PC-9 (cell line): ENCODE measurements at regions of chr3 and their contacts with region 1.

Region 1: DNA sequence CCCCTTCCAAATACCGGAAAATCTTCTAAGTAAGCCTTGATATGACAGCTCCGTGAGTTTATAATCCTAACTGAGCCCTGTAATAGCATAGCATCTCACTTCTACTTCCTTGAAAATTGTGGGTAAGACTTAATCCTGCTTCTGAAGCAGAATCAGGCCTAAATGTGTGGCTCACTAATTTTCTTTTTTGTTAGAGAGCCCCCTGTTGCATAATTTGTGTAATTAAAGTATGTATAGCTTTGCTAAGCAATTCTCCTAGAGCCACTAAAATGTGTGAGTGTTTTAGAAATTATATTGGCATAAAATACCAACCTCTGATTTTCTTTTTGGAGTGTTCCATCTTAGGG is 304.4 kb downstream of the FGF12 start:
- DNase-seq: peak in 1 of 2 experiments; percentile 65
- H3K4me3 ChIP-seq: no peak overlapping the region
- H3K27ac ChIP-seq: no peak overlapping the region
- H3K4me1 ChIP-seq: peaks cover 9% of the 10 kb centered on the region
- H3K27me3 ChIP-seq: no peaks in the 10 kb centered on the region
- CTCF ChIP-seq: peak; percentile 79

Region 2: DNA sequence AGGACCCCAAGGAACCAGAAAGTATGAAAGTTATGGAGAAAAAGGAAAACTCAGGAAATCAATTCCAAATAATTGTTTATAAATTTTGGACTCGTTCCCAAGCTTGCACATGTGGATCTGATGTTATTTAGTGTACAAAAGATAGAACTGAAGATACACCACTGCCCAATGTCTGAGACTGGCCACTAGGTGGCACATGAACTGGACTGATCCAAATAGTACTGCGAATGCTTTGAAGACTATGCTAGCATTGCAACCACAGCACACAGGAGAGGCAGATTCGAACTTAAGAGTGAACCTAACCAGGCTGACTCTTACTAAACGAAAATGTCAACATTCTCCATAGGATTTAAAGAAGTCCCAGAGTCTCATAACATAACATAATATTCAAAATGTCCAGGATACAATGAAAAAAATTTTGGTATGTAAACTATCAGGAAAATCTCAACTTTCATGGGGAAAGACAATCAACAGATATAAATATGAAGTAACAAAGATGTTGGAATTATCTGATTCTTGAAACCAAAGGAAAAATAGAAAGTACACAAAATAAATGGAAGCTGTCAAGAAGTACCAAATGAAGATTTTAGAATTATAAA is 292.3 kb before region 1 on chr3:
- CTCF ChIA-PET with region 1: interaction called, 3 read pairs
- POLR2A ChIA-PET with region 1: no interaction called
- intact Hi-C with region 1: loop called (anchors 5 kb)
- DNase-seq: peak; percentile 39 to 53
- H3K4me3 ChIP-seq: no peak overlapping the region
- H3K27ac ChIP-seq: no peak overlapping the region
- H3K4me1 ChIP-seq: no peaks in the 10 kb centered on the region
- H3K27me3 ChIP-seq: no peaks in the 10 kb centered on the region
- CTCF ChIP-seq: peak; percentile 97

Region 3: DNA sequence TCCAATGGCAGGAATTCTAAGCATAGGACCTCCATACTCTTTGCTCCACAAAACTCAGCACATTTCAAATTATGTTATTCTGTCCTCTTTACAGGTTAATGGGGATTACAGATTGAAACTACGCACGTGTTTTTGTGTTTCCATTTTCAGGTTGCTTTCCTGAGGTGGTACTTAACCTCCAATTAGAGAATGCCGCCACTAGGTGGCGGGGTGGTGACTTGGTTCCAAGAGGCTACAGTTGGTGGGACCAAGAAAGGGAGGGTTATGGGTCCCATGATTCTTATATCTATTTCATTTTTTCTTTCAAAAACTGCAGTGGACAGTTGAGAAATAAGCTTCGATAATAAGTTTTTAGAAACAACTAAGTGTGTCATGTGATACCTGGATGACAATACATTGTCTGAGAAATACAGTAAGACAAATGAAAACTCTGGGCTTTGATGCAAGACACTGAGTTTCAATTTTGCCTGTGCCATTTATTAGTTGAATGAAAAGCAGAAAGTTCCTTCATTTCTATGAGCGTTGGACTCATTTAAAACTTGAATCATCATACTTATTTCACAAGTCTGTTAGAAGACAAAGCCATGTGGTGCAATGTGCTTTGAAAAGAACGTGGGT is 234.6 kb before region 1 on chr3:
- CTCF ChIA-PET with region 1: interaction called, 7 read pairs
- POLR2A ChIA-PET with region 1: no interaction called
- intact Hi-C with region 1: loop called (anchors 2 kb)
- DNase-seq: peak; percentile 39 to 55
- H3K4me3 ChIP-seq: no peak overlapping the region
- H3K27ac ChIP-seq: no peak overlapping the region
- H3K4me1 ChIP-seq: no peaks in the 10 kb centered on the region
- H3K27me3 ChIP-seq: no peaks in the 10 kb centered on the region
- CTCF ChIP-seq: peak; percentile 99

Region 4: DNA sequence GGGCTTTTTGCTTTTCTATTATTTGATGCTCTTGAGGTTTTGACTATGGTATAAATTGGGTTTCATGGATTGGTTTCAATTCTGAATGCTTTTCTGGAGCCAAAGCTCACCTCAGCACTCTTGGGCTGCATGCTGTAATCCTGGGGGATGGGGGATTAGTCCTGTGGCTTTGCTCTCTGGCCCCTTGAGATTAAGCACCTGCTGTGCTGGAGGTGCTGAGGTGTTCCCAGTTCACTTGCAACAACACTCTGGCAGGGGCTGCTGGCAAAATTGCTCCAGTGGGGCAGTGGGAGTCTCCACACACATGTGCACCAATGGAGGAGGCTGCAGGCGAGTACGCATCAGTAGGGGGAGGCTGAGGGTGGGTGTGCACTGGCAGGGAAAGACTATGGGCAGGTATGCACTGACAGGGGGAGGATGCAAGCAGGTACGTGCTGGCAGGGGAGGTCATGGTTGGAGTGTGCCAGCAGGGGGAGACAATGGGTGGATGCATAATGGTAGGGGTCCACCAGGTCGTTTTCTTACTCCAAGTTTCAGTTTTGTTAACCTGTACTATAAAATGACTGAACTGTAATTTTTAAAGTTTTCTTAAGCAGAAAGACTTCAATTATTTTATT is 184.9 kb before region 1 on chr3:
- CTCF ChIA-PET with region 1: interaction called, 12 read pairs
- POLR2A ChIA-PET with region 1: interaction called, 5 read pairs
- intact Hi-C with region 1: no loop called
- DNase-seq: no peak
- H3K4me3 ChIP-seq: no peak overlapping the region
- H3K27ac ChIP-seq: no peak overlapping the region
- H3K4me1 ChIP-seq: no peaks in the 10 kb centered on the region
- H3K27me3 ChIP-seq: no peaks in the 10 kb centered on the region
- CTCF ChIP-seq: peak; percentile 35; the same call in 1 of the 2 replicates